ENCODE measurements at regions of chr10 and their contacts with region 1.

Region 1: GRCh38 chr10:87659571-87660483 is at the start of gene PAPSS2:
- DNase-seq: peak; percentile 48 to 56
- H3K4me3 ChIP-seq: peak within 1 kb of the TSS; percentile 79
- H3K4me3 Mint-ChIP-seq: peak within 1 kb of the TSS; percentile 91
- H3K27ac Mint-ChIP-seq: peak within 1 kb of the TSS; percentile 32
- H3K4me1 ChIP-seq: peaks cover 5% of the 10 kb centered on the region; the same call in 1 of the 2 replicates
- H3K4me1 Mint-ChIP-seq: peaks cover 11% of the 10 kb centered on the region
- H3K27me3 ChIP-seq: no peaks in the 10 kb centered on the region
- H3K27me3 Mint-ChIP-seq: peaks cover 3% of the 10 kb centered on the region
- CTCF ChIP-seq: peak in 1 of 2 experiments; percentile 17
- total RNA-seq, gene PAPSS2: 4.3 and 6.2 TPM in 2 replicates

Region 2: GRCh38 chr10:87534173-87534858 is 125.5 kb before region 1 on chr10:
- CTCF ChIA-PET with region 1: interaction called, 3 read pairs
- POLR2A ChIA-PET with region 1: no interaction called
- intact Hi-C with region 1: loop called (anchors 1 kb)
- DNase-seq: no peak
- H3K4me3 ChIP-seq: no peak overlapping the region
- H3K4me3 Mint-ChIP-seq: no peak overlapping the region
- H3K27ac Mint-ChIP-seq: no peak overlapping the region
- H3K4me1 ChIP-seq: no peaks in the 10 kb centered on the region
- H3K4me1 Mint-ChIP-seq: no peaks in the 10 kb centered on the region
- H3K27me3 ChIP-seq: no peaks in the 10 kb centered on the region
- H3K27me3 Mint-ChIP-seq: no peaks in the 10 kb centered on the region
- CTCF ChIP-seq: no peak

Region 3: GRCh38 chr10:87700031-87700796 is 40.4 kb after region 1 on chr10:
- CTCF ChIA-PET with region 1: no interaction called
- POLR2A ChIA-PET with region 1: no interaction called
- intact Hi-C with region 1: loop called (anchors 5 kb)
- DNase-seq: no peak
- H3K4me3 ChIP-seq: no peak overlapping the region
- H3K4me3 Mint-ChIP-seq: no peak overlapping the region
- H3K27ac Mint-ChIP-seq: no peak overlapping the region
- H3K4me1 ChIP-seq: peaks cover 21% of the 10 kb centered on the region
- H3K4me1 Mint-ChIP-seq: peaks cover 18% of the 10 kb centered on the region
- H3K27me3 ChIP-seq: no peaks in the 10 kb centered on the region; the same call in 1 of the 2 replicates
- H3K27me3 Mint-ChIP-seq: no peaks in the 10 kb centered on the region
- CTCF ChIP-seq: no peak

Region 4: GRCh38 chr10:87734987-87735827 is 75.4 kb after region 1 on chr10:
- CTCF ChIA-PET with region 1: interaction called, 4 read pairs
- POLR2A ChIA-PET with region 1: no interaction called
- intact Hi-C with region 1: loop called (anchors 1 kb)
- DNase-seq: peak in 1 of 2 experiments; percentile 53
- H3K4me3 ChIP-seq: no peak overlapping the region
- H3K4me3 Mint-ChIP-seq: no peak overlapping the region
- H3K27ac Mint-ChIP-seq: no peak overlapping the region
- H3K4me1 ChIP-seq: 0 out of 2 replicates have a peak, but pooled peaks cover under 1% of the 10 kb centered on the region
- H3K4me1 Mint-ChIP-seq: no peaks in the 10 kb centered on the region
- H3K27me3 ChIP-seq: no peaks in the 10 kb centered on the region
- H3K27me3 Mint-ChIP-seq: no peaks in the 10 kb centered on the region
- CTCF ChIP-seq: peak; percentile 79

Region 5: GRCh38 chr10:87771871-87772500 is 112.2 kb after region 1 on chr10:
- CTCF ChIA-PET with region 1: no interaction called
- POLR2A ChIA-PET with region 1: no interaction called
- intact Hi-C with region 1: loop called (anchors 1 kb)
- DNase-seq: peak in 1 of 2 experiments; percentile 23
- H3K4me3 ChIP-seq: no peak overlapping the region
- H3K4me3 Mint-ChIP-seq: no peak overlapping the region
- H3K27ac Mint-ChIP-seq: no peak overlapping the region
- H3K4me1 ChIP-seq: peaks cover 19% of the 10 kb centered on the region
- H3K4me1 Mint-ChIP-seq: peaks cover 7% of the 10 kb centered on the region
- H3K27me3 ChIP-seq: no peaks in the 10 kb centered on the region
- H3K27me3 Mint-ChIP-seq: no peaks in the 10 kb centered on the region
- CTCF ChIP-seq: peak; percentile 41 to 48

Measured in Caco-2 (cell line).